Heart right ventricle (tissue), 16 donors: ENCODE measurements at regions of chr9 and their contacts with region 1.

Region 1: GRCh38 chr9:37582548-37583157 is 6.5 kb upstream of the FBXO10 start:
- DNase-seq: no peak
- ATAC-seq: peak in 4 of 8 donors; percentile 25 to 42 (median 34)
- H3K4me3 ChIP-seq: no peak overlapping the region
- H3K27ac ChIP-seq: no peak overlapping the region
- H3K4me1 ChIP-seq: no peaks in the 10 kb centered on the region
- H3K27me3 ChIP-seq: no peaks in the 10 kb centered on the region
- CTCF ChIP-seq: peak; percentile 44 to 83 (median 70)

Region 2: GRCh38 chr9:36676778-36677485 is 905.7 kb before region 1 on chr9:
- intact Hi-C with region 1: no loop called
- DNase-seq: no peak
- ATAC-seq: no peak
- H3K4me3 ChIP-seq: no peak overlapping the region
- H3K27ac ChIP-seq: no peak overlapping the region
- H3K4me1 ChIP-seq: no peaks in the 10 kb centered on the region
- H3K27me3 ChIP-seq: no peaks in the 10 kb centered on the region
- CTCF ChIP-seq: no peak

Region 3: GRCh38 chr9:37027582-37028419 is 554.9 kb before region 1 on chr9:
- intact Hi-C with region 1: no loop called
- DNase-seq: peak; percentile 82 to 85
- ATAC-seq: peak; percentile 88 to 98 (median 97)
- H3K4me3 ChIP-seq: peak overlapping the region in 9 of 10 donors; percentile 1 to 46 (median 30)
- H3K27ac ChIP-seq: no peak overlapping the region
- H3K4me1 ChIP-seq: peaks cover 10 to 51% (median 41%) of the 10 kb centered on the region in 9 donors
- H3K27me3 ChIP-seq: peaks cover 54 to 100% (median 100%) of the 10 kb centered on the region in 7 donors
- CTCF ChIP-seq: no peak

Region 4: DNA sequence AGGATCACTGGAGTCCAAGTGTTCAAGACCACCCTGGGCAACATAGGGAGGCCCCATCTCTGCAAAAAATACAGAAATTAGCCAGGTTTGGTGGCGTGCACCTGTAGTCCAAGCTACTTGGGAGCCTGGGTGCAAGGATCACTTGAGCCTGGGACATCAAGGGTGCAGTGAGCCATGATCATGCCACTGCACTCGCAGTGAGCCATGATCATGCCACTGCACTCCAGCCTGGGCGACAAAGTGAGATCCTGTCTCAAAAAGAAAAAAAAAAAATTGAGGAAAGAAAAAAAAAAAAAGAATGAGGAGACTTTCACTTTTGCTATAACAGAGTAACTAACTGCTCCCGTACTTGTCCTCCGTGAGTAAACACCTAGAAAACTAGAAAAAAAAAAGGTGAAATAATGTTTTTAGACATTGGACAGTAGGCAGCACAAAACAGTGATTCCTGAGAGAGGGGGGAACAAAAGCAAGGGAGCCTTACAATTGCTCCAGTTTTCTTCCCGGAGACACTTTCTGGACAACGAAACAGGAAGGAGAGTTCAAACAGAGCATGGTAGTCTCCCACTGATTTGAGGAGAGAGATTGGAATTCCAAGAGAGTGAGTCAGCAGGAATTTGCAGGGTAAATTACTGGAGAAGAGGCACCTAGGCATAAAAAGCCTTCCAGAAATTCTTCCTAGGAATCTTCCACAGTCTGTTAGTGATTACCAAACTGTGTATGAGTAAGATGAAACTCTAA is 110.5 kb before region 1 on chr9:
- intact Hi-C with region 1: loop called in 1 of 10 experiments (anchors 10 kb)
- DNase-seq: no peak
- ATAC-seq: peak in 7 of 8 donors; percentile 46 to 72 (median 64)
- H3K4me3 ChIP-seq: peak overlapping the region in 7 of 10 donors; percentile 8 to 49 (median 43)
- H3K27ac ChIP-seq: peak overlapping the region in 9 of 10 donors; percentile 44 to 83 (median 68)
- H3K4me1 ChIP-seq: peaks cover 0 to 14% (median 11%) of the 10 kb centered on the region in 9 donors
- H3K27me3 ChIP-seq: peaks cover 0 to 3% (median 0%) of the 10 kb centered on the region in 7 donors
- CTCF ChIP-seq: no peak

Region 5: DNA sequence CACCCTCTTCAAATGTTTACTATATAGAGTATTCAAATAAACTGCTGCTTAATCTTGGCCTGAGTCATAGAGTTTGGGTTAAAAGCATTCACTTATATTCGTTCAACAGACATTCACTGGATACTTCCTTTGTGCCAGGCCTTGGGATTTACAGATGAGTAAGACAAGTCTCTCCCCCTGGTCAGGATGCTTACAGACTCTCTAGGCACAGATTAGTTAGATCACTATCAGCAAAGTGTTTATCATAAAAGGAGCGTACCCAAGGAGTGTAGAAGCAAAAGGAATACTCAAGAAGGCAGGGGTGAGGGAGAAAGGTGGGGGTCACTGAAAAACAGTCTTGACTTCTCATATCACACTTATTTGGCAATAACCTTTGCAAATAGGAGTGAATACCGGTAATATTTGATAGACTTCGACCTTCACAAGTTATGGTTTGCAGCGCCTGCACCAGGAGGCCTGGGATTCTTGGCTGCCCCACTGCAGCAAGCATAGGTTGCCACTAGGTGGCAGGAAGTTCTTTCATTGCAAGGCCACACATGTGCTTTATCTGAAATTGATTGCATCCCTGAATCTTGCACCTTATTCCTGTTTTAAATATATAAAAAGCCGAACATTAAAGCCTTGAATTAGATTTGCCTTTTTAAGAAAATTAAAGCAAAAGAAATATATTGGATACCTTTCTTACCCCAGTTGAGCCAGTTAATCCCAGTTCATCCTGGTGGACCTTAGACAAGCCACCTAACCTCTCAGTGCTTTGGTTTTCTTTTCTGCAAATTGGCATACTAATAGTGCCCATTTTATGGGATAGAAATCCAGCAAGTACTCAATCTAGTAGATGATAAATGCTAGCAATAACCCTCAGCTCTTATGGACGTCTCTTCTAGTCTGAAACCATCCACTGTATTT is 164.4 kb after region 1 on chr9:
- intact Hi-C with region 1: loop called in 3 of 10 experiments (anchors 10 kb)
- DNase-seq: peak; percentile 30 to 35
- ATAC-seq: peak in 7 of 8 donors; percentile 47 to 82 (median 76)
- H3K4me3 ChIP-seq: no peak overlapping the region
- H3K27ac ChIP-seq: no peak overlapping the region
- H3K4me1 ChIP-seq: no peaks in the 10 kb centered on the region
- H3K27me3 ChIP-seq: no peaks in the 10 kb centered on the region
- CTCF ChIP-seq: peak; percentile 58 to 91 (median 85)

Region 6: GRCh38 chr9:37753489-37754190 is 171.0 kb after region 1 on chr9 and contains the start of gene TRMT10B:
- intact Hi-C with region 1: loop called in 3 of 10 experiments (anchors 10 kb)
- DNase-seq: peak; percentile 68 to 71
- ATAC-seq: peak; percentile 93 to 97 (median 96)
- H3K4me3 ChIP-seq: peak within 1 kb of the TSS; percentile 45 to 95 (median 72)
- H3K27ac ChIP-seq: peak within 1 kb of the TSS in 9 of 10 donors; percentile 51 to 90 (median 84)
- H3K4me1 ChIP-seq: peaks cover 0 to 14% (median 9%) of the 10 kb centered on the region in 9 donors
- H3K27me3 ChIP-seq: no peaks in the 10 kb centered on the region
- CTCF ChIP-seq: no peak
- total RNA-seq, gene TRMT10B: 2.6 to 6.5 (median 3.6) TPM

Region 7: GRCh38 chr9:37784616-37785483 is 202.2 kb after region 1 on chr9 and contains the start of gene EXOSC3:
- intact Hi-C with region 1: loop called in 3 of 10 experiments (anchors 10 kb)
- DNase-seq: peak; percentile 88 to 92
- ATAC-seq: peak; percentile 94 to 98 (median 98)
- H3K4me3 ChIP-seq: peak within 1 kb of the TSS; percentile 57 to 99 (median 89)
- H3K27ac ChIP-seq: peak within 1 kb of the TSS in 9 of 10 donors; percentile 72 to 89 (median 79)
- H3K4me1 ChIP-seq: peaks cover 0 to 28% (median 25%) of the 10 kb centered on the region in 9 donors
- H3K27me3 ChIP-seq: peaks cover 0 to 14% (median 6%) of the 10 kb centered on the region in 7 donors
- CTCF ChIP-seq: peak in 3 of 9 donors; percentile 22 to 34 (median 23)
- total RNA-seq, gene EXOSC3: 7.5 to 15.2 (median 12.8) TPM

Region 8: GRCh38 chr9:37800631-37801286 is 218.1 kb after region 1 on chr9 and contains the start of gene DCAF10:
- intact Hi-C with region 1: loop called in 1 of 10 experiments (anchors 10 kb)
- DNase-seq: peak; percentile 87 to 88
- ATAC-seq: peak; percentile 95 to 97 (median 97)
- H3K4me3 ChIP-seq: peak within 1 kb of the TSS; percentile 78 to 99 (median 96)
- H3K27ac ChIP-seq: peak within 1 kb of the TSS; percentile 18 to 94 (median 88)
- H3K4me1 ChIP-seq: peaks cover 8 to 39% (median 35%) of the 10 kb centered on the region in 9 donors
- H3K27me3 ChIP-seq: no peaks in the 10 kb centered on the region
- CTCF ChIP-seq: no peak
- total RNA-seq, gene DCAF10: 16.1 to 23.4 (median 19.6) TPM